Sciatic nerve (tissue), 2 donors: ENCODE measurements at regions of chr11 and their contacts with region 1.

Region 1: GRCh38 chr11:29679996-29680395 is 336.8 kb downstream of the KCNA4 start:
- DNase-seq: no peak
- ATAC-seq: no peak

Region 2: GRCh38 chr11:30510750-30511149 is 830.8 kb after region 1 on chr11:
- intact Hi-C with region 1: loop called (anchors 5 kb)
- DNase-seq: no peak
- ATAC-seq: no peak